ENCODE measurements at regions of chr6 and their contacts with region 1.

Region 1: GRCh38 chr6:127186889-127187288 is 68.4 kb downstream of the RSPO3 start:
- DNase-seq: peak; percentile 53
- H3K4me3 Mint-ChIP-seq: no peak overlapping the region
- H3K27ac Mint-ChIP-seq: no peak overlapping the region
- H3K4me1 Mint-ChIP-seq: no peaks in the 10 kb centered on the region
- H3K27me3 Mint-ChIP-seq: peaks cover 55% of the 10 kb centered on the region
- CTCF ChIP-seq: peak; percentile 30

Region 2: DNA sequence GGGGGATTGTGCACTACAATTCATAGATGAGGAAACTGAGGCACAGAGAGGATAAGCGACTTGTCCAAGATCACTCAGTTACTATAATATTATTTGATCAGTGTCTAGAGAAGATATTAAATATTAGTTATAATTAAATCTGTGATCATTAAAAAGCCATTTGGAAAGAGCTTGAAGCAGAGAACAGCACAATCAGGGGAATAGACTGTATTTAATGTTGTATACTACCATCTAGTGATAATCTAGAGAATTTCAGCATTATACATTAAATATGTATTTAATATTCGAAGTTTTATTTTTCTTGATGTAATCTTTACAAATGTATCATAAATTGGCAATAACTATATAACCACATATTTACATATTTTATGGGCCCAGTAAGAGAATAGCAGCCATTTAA is 352.4 kb after region 1 on chr6:
- CTCF ChIA-PET with region 1: interaction called, 9 read pairs
- POLR2A ChIA-PET with region 1: no interaction called
- intact Hi-C with region 1: loop called (anchors 5 kb)
- DNase-seq: peak; percentile 14
- H3K4me3 Mint-ChIP-seq: no peak overlapping the region
- H3K27ac Mint-ChIP-seq: no peak overlapping the region
- H3K4me1 Mint-ChIP-seq: peaks cover 5% of the 10 kb centered on the region
- H3K27me3 Mint-ChIP-seq: peaks cover 36% of the 10 kb centered on the region
- CTCF ChIP-seq: peak; percentile 27